GM10248 (cell line): ENCODE measurements at regions of chr18 and their contacts with region 1.

Region 1: GRCh38 chr18:8696749-8697211 is 8.6 kb upstream of the MTCL1 start:
- DNase-seq: peak; percentile 81
- CTCF ChIP-seq: peak; percentile 79

Region 2: DNA sequence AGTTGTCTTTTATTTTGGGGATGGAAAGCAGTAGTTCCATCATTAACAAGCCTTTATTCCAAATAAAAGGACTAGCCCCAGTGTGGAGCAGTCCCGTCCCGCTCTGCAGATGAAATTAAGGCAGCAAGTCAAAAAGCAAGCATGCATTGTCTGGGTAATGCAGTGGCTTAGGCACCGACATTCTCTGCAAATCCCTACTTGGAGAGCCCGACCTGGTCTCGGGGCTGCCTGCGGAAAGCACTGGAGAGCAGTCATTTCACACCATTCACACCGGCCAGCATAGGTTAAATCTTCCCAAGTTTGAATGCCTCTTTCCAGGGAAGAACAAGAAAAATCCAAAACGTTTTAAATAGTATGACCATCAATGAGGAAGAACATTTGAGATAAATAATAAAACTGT is 112.0 kb before region 1 on chr18:
- CTCF ChIA-PET with region 1: no interaction called
- POLR2A ChIA-PET with region 1: no interaction called
- DNase-seq: no peak
- CTCF ChIP-seq: no peak

Region 3: GRCh38 chr18:8685141-8685913 is 11.5 kb before region 1 on chr18:
- CTCF ChIA-PET with region 1: interaction called, 42 read pairs
- POLR2A ChIA-PET with region 1: no interaction called
- DNase-seq: no peak
- CTCF ChIP-seq: no peak

Region 4: GRCh38 chr18:8715599-8715998 is 18.8 kb after region 1 on chr18:
- CTCF ChIA-PET with region 1: interaction called, 18 read pairs
- POLR2A ChIA-PET with region 1: no interaction called
- DNase-seq: no peak
- CTCF ChIP-seq: no peak

Region 5: DNA sequence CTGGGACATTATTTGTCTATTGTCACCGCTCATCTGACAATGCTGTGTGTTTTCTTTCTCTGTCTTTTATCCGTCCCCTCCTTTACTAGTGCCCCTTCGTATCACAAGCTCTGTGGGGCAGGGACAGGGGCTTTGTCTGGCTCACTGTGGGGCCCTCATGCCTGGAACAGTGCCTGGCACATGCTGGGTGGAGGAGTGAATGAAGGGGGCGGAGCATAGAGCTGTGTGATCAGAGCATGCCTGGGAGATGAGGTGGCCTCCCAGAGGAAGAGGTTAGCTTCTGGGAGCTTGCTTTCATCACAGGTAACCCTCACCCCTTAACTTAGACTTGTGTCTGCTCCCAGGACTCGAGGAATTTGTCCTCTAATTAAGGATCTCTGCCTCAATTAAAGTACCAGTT is 24.9 kb after region 1 on chr18:
- CTCF ChIA-PET with region 1: interaction called, 18 read pairs
- POLR2A ChIA-PET with region 1: no interaction called
- DNase-seq: no peak
- CTCF ChIP-seq: no peak

Region 6: DNA sequence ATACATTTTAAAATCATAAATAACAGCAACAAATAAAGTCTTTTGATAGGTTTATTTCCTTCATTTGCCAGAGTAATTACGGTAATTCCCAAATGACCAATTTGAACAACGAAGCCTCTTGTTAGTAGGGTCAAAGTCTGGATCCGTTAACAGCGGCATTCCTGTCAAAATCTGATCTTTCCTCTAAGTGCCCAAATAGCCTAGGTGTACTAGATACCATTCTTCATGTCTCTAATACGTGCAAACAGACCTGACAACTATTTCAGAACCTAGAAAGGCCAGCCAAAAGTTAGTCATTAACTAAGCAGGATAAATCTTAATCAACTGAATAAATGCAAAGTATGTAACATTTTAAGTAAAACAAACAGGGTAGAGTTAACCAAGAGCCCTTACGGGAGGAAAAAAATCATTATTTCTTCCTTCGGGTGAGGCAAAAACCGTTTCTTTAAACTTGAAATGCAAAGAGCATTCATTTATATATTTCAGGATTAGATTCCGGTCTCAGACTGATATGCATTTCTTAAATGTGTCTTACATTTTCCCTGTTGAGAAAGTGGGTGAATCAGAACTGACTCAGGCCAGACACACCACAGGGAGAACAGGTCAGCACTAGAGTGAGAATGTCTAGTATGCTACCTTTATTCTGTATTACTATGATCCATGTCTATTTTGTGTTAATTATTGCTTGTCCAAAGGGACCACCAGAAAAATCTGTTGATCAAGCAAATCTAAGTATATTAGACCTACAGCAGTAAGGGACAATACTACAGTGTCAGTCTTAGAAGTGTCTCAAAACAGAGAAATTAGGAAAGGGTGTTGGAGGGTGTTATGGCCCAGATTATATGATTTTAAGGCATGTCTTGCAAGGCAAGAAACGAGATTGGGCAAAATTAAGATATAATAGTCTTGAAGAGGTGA is 264.2 kb after region 1 on chr18:
- CTCF ChIA-PET with region 1: no interaction called
- POLR2A ChIA-PET with region 1: no interaction called
- DNase-seq: no peak
- CTCF ChIP-seq: no peak

Region 7: DNA sequence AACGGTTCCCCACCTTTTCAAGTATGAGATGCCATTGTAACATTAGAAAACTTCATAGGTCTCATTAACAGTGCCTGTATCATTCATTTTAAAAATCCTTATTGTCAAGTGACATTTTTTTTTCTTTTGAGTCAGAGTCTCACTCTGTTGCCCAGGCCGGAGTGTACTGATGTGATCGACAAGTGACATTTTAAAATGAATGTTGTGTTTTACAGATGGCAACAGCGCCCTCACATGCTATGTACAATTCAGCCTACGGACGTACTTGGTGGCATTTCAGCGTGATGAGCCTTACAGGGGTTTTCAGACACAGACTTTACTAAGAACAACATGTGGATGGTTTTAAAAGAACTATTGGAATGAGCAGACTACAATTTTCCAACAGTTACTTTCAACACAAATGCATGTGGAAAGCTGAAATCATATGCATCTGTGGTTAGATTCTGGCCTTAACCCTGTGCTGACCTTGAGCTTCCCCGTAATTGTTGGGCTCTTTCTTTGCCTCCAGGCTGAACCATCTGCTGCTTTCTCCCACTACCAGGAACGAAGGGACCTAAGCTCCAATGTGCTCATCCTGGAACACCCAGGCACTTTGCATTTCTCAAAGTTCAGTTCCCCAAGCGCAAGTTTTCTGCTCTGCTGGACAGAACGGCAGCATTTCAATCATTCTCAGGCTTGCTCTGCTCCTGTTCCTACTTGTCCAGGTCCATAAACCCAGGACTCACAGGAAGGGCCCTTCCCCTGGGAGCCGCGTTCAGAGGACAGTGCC is 285.8 kb after region 1 on chr18:
- CTCF ChIA-PET with region 1: interaction called, 36 read pairs
- POLR2A ChIA-PET with region 1: no interaction called
- DNase-seq: no peak
- CTCF ChIP-seq: peak; percentile 34

Region 8: GRCh38 chr18:8988261-8988871 is 291.6 kb after region 1 on chr18:
- CTCF ChIA-PET with region 1: interaction called, 36 read pairs
- POLR2A ChIA-PET with region 1: no interaction called
- DNase-seq: peak; percentile 74
- CTCF ChIP-seq: peak; percentile 80

Region 9: DNA sequence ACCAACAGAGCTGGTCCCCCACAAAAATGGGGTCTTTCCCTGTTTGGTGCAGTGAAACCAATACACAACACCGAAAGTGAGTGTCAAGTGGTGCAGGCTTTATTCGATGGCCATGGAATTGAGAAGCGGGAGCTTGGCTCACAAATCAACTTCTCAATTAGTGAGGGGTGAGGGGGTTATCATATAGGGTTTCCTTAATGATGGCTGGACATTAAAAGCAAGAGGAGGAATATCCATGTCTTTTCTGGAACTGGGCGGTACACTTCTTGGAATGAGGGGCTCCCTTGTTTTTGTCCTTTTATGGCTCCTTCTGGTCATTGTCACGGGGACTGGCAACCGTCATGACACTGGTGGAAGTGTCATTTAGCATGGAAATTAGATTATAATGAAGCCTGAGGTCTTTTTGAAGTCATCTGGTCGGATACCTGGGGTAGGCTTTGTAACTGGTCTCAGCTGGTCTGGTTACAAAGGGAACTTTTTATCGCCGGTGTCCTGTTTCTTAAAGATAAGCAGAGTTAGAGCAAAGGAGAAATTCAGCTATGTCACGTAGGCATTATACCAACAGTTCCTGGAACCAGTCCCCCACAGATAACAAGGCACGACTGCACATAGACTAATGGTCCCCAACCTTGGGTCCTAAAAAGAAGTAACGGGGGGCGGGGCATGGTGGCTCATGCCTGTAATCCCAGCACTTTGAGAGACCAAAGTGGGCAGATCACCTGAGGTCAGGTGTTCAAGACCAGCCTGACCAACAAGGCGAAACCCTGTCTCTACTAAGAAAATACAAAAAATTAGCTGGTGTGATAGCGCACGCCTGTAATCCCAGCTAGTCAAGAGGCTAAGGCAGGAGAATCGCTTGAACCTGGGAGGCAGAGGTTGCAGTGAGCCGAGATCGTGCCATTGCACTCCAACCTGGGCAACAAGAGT is 312.2 kb after region 1 on chr18:
- CTCF ChIA-PET with region 1: no interaction called
- POLR2A ChIA-PET with region 1: no interaction called
- DNase-seq: no peak
- CTCF ChIP-seq: no peak